ENCODE measurements at regions of chr9 and their contacts with region 1.

Region 1: DNA sequence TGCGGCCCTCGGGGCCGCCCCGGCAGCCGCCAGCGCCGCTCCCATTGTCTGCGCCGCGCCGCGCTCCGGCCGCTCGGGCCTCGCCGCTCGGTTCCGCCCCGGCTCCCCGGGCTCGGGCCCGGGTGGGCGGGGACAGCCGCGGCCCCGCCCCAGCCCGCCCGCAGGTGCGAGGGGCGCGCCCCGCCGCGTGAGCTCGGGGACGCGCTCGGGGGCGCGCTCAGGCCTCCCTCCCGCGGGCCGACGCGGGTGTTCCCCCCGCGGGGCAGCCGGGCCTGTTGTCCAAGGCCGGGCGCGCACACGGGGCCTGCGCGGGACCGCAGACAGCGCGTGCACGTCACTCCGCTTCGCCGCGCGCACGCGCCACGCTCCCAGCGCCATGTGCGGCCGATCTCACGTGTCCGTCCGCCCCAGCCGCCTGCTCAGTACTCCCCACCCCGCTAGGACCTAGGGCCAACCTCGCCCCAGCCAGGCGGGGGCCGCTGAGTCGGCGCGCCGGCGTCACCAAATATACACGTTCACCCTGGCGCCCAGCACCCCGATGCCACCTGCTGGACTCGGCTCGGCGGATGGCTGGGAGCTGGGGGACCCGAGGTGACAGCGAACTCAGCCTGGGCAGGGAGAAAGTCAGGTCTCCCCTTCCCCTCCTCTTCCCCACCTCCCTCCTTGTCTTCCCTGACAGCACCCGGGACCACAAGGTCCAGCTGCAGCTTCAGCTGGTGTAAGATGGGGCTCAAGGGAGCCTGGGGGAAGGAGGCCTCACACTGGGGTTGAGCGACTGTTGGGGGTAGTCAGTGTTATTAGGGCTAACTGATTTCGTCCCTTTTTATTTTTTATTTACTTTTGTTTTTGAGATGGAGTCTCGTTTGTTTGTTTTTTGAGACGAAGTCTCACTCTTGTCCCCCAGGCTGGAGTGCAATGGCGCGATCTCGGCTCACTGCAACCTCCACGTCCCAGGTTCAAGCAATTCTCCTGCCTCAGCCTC is 14.3 kb downstream of the GBGT1 start:
- DNase-seq: peak; percentile 87
- H3K4me3 ChIP-seq: peak overlapping the region; percentile 36
- H3K27ac ChIP-seq: peak overlapping the region; percentile 72
- H3K4me1 ChIP-seq: peaks cover 17% of the 10 kb centered on the region
- H3K27me3 ChIP-seq: no peaks in the 10 kb centered on the region
- CTCF ChIP-seq: no peak

Region 2: DNA sequence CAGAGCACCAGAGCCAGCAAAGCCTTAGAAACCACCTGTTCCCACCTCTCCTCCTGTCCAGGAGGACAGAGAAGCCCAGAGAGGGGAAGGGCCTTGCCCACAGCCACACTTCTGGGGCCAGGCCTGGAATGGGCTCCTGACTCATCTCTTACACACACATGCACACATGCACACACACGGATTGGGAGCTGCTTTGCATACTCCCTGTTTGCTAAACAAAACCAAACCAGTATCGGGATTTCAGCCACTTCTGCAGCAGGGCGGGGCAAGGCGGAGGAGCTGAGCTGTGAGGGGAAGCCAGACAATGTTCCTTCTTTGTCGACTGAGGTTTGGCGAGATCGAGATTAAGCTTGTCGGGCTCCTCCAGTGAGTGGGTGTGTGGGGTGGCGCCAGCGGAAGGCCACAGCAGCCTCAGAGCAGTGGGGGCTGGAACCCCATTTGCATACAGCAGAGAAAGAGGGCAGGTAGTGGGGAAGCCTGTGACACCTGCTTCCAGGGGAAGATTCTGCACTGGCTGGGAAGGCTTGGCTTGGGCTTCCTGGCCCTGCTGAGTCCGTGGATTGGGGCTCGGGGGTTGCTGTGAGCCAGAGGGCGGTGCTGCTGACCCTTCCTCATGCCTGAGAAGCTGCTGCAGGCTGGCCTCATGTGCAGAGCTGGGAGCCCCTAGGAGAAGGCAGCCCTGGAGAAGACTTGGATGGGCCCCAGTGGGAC is 154.9 kb before region 1 on chr9:
- intact Hi-C with region 1: no loop called
- DNase-seq: peak; percentile 36
- H3K4me3 ChIP-seq: no peak overlapping the region
- H3K27ac ChIP-seq: no peak overlapping the region
- H3K4me1 ChIP-seq: no peaks in the 10 kb centered on the region
- H3K27me3 ChIP-seq: peaks cover 3% of the 10 kb centered on the region
- CTCF ChIP-seq: no peak

Region 3: DNA sequence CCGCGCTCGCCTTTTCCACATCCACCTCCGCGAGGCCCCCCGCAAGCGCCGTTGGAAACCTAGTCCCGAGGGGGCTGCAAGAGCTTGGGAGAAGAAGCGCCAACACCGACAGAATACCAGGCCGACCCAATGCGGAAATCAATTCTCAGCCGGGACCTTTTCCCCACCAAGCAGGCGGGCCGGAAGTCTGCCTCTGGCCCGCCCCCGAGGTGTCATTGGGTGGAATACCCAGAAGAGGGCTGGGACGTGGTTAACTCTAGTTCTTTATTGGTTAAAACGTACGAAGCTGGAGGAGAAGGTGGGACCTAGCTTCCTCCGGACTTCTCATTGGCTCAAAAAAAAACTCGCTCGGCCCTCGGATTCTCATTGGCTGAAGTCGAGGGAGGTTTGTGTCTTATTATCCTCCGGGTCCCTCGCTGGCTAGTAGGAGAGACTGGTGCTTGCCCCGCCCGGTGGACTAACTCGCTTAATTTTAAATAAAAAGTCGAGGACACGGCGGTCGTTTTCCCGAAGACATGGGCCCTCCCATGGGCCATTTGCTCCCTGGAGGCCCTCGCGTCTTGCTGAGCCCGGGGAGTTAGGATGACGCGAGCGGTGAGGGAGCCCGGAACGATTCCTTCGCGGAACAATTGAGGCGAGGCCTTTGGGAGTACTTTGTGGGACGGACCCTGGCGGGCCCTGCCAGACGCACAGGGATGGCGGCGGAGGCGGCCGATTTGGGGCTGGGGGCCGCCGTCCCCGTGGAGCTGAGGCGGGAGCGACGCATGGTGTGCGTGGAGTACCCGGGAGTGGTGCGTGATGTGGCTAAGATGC is 118.9 kb before region 1 on chr9 and contains the start of gene GTF3C5:
- intact Hi-C with region 1: loop called (anchors 5 kb)
- DNase-seq: peak; percentile 95
- H3K4me3 ChIP-seq: peak within 1 kb of the TSS; percentile 77
- H3K27ac ChIP-seq: peak within 1 kb of the TSS; percentile 78
- H3K4me1 ChIP-seq: peaks cover 9% of the 10 kb centered on the region
- H3K27me3 ChIP-seq: no peaks in the 10 kb centered on the region
- CTCF ChIP-seq: no peak
- total RNA-seq, gene GTF3C5: 42.3 to 70.9 TPM

Region 4: GRCh38 chr9:133048569-133048968 is 100.8 kb before region 1 on chr9:
- intact Hi-C with region 1: loop called (anchors 5 kb)
- DNase-seq: no peak
- H3K4me3 ChIP-seq: no peak overlapping the region
- H3K27ac ChIP-seq: no peak overlapping the region
- H3K4me1 ChIP-seq: peaks cover 3% of the 10 kb centered on the region
- H3K27me3 ChIP-seq: no peaks in the 10 kb centered on the region
- CTCF ChIP-seq: no peak

Region 5: DNA sequence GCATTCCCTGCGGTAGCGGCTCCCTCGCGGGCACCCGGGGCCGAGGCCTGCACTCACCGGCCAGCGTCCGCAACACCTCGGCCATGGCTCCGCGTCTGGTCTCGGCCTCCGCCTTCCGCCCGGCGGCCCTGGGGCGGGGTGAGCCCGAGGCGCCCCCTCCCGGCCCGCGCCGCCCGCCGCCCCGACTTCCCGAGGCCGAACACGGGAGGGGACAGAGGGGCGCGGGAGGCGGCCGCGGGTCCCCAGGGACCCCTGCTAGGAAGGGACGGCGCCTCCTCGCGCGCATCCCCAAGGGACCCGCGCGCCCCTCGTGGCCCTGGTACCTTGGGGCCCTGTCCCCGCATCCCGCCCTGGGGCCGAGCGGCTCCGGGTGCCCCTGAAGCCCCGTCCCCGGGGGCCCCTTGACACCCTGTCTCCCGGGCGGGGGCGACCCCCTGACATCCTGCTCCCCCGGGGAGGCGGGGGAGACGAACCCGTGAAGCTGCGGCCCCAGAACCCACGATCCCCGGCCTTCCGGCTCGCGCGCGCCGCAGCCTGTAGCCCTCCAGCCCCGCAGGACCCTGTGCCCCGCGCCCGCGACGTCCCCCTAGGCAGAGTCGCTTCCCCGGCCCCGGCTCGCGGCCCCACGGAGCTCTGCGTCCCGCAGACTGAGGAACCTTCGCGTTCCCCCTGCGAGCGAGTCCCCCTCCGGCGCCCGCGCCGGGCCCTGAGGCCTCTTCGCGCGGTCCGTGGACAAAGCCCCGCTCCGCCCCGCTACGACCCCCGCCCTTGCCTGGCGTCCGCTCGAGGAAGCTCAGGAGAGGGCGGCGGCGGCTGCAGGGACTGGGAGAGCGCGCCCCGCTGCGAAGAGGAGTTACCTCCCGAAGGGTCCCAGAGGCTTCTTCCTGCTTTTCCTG is 125.9 kb after region 1 on chr9 and contains the start of gene ABO:
- intact Hi-C with region 1: no loop called
- DNase-seq: peak; percentile 61
- H3K4me3 ChIP-seq: peak within 1 kb of the TSS; percentile 65
- H3K27ac ChIP-seq: peak within 1 kb of the TSS; percentile 96
- H3K4me1 ChIP-seq: no peaks in the 10 kb centered on the region
- H3K27me3 ChIP-seq: no peaks in the 10 kb centered on the region
- CTCF ChIP-seq: peak; percentile 23
- total RNA-seq, gene ABO: 58.0 to 77.7 TPM

Region 6: GRCh38 chr9:133309608-133310007 is 160.2 kb after region 1 on chr9:
- intact Hi-C with region 1: no loop called
- DNase-seq: no peak
- H3K4me3 ChIP-seq: no peak overlapping the region
- H3K27ac ChIP-seq: no peak overlapping the region
- H3K4me1 ChIP-seq: no peaks in the 10 kb centered on the region
- H3K27me3 ChIP-seq: no peaks in the 10 kb centered on the region
- CTCF ChIP-seq: no peak

Region 7: GRCh38 chr9:133320421-133320881 is 171.0 kb after region 1 on chr9:
- intact Hi-C with region 1: no loop called
- DNase-seq: no peak
- H3K4me3 ChIP-seq: no peak overlapping the region
- H3K27ac ChIP-seq: no peak overlapping the region
- H3K4me1 ChIP-seq: no peaks in the 10 kb centered on the region
- H3K27me3 ChIP-seq: no peaks in the 10 kb centered on the region
- CTCF ChIP-seq: no peak